Activated naive CD8-positive, alpha-beta T cell treated with anti-CD3 and anti-CD28 coated beads, Interleukin-2, amount 10 ng/mL, durations not matched to agents 7 days and 5 days (primary cell): ENCODE measurements at regions of chr5 and their contacts with region 1.

Region 1: DNA sequence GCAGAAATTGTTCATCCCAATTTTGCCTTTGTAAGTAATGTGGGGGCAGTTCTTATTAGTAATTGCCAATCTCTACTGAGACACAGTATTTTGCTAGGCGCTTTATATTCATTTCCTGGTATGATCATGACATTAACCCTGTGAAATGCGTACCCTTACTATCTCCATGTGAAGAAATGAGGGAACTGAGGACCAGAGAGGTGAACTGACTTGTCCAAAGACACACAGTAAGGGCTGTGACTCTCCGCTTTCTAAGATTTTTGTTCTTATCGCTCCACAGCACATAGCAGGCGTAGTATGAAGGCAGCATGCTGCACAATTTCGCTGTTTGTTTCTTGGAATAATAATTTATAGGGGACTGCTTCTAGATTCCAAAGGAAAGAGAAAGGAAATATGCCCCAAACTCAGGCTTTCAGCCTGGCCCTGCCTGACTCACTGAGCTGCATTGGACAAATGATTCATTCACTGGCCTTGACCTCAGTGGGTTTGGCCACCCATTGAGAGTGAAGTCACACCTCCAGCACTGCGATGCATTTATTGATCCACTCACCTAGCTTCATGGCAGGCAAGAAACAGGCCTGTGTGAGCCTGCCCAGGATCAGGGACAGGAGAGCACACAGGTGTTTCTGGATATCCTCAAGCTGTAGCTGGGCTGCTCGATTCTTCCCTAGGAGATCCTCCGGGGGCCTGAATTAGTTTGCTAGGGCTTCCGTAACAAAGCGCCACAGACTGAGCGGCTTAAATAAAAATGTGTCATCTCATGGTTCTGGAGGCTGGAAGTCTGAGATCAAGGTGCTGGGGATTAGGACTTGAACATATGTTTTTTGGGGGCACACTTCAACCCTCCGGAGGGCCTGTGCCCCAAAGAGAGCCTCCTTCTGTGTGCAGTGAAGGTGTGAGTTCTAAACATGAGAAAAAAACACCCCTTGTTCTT is 7.2 kb upstream of the DUSP1 start:
- DNase-seq: no peak
- ATAC-seq: peak; percentile 27
- H3K4me3 Mint-ChIP-seq: peak overlapping the region; percentile 85
- H3K27ac Mint-ChIP-seq: peak overlapping the region; percentile 98
- H3K4me1 Mint-ChIP-seq: peaks cover 22% of the 10 kb centered on the region
- H3K27me3 Mint-ChIP-seq: no peaks in the 10 kb centered on the region

Region 2: DNA sequence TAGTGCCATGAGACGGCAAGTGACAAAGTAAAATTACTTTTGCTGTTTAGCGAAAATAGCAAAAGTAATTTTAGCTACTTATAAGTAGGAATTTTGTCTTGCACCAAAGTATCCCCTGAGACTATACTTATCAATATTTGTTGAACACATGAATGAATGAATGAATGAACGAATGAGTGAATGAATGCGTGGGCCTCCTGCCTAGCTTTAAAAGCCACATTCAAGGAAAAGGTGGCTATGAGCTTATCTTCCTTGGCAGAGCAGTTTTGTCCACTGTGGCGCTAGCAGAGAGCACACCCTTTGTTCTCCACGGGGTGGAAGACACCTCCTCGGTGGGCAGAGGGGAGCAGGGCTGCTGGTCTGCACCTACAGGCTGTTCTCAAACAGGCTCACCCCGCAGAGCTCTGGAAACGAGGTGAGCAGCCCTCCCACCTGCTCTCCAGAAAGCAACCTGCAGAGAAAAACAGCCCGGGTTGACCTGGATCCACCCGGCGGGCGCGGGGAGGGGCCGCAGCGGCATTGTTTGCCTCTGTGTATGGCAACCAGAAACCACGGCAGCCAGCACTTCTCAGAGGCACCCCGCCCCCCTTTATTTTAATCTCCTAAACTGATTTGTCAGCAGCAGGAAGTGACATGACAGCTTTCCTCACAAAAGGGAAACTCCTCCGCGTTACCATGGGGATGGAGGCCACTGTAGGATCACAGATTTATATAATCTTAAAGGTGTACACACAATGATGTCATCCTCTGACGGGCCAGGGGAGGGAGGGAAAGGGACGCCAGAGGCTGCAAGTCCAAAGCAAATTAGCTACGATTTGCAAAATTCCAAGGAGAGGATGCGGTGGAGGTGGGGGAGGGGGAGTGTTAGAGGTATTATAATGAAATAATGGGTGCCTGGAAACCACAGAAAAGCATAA is 13.0 kb before region 1 on chr5:
- POLR2A ChIA-PET with region 1: interaction called, 16 read pairs
- DNase-seq: peak; percentile 89
- ATAC-seq: peak; percentile 81
- H3K4me3 Mint-ChIP-seq: peak overlapping the region; percentile 81
- H3K27ac Mint-ChIP-seq: peak overlapping the region; percentile 82
- H3K4me1 Mint-ChIP-seq: peaks cover 27% of the 10 kb centered on the region
- H3K27me3 Mint-ChIP-seq: peaks cover 9% of the 10 kb centered on the region

Region 3: GRCh38 chr5:172788771-172789686 is 10.9 kb after region 1 on chr5:
- POLR2A ChIA-PET with region 1: interaction called, 26 read pairs
- DNase-seq: peak; percentile 50
- ATAC-seq: peak; percentile 86
- H3K4me3 Mint-ChIP-seq: no peak overlapping the region
- H3K27ac Mint-ChIP-seq: peak overlapping the region; percentile 67
- H3K4me1 Mint-ChIP-seq: peaks cover 5% of the 10 kb centered on the region
- H3K27me3 Mint-ChIP-seq: no peaks in the 10 kb centered on the region